ENCODE measurements at regions of chr15 and their contacts with region 1.

Region 1: GRCh38 chr15:91942676-91943576 is 89.4 kb downstream of the SLCO3A1 start:
- DNase-seq: peak; percentile 99
- H3K4me3 Mint-ChIP-seq: peak overlapping the region; percentile 65
- H3K27ac Mint-ChIP-seq: peak overlapping the region; percentile 95
- H3K4me1 Mint-ChIP-seq: peaks cover 71% of the 10 kb centered on the region
- H3K27me3 Mint-ChIP-seq: no peaks in the 10 kb centered on the region
- CTCF ChIP-seq: no peak

Region 2: GRCh38 chr15:91302588-91303439 is 640.1 kb before region 1 on chr15:
- CTCF ChIA-PET with region 1: interaction called, 36 read pairs
- POLR2A ChIA-PET with region 1: interaction called, 3 read pairs
- intact Hi-C with region 1: loop called (anchors 2 kb)
- DNase-seq: peak; percentile 77
- H3K4me3 Mint-ChIP-seq: no peak overlapping the region
- H3K27ac Mint-ChIP-seq: no peak overlapping the region
- H3K4me1 Mint-ChIP-seq: no peaks in the 10 kb centered on the region
- H3K27me3 Mint-ChIP-seq: peaks cover 81% of the 10 kb centered on the region
- CTCF ChIP-seq: peak; percentile 75

Region 3: DNA sequence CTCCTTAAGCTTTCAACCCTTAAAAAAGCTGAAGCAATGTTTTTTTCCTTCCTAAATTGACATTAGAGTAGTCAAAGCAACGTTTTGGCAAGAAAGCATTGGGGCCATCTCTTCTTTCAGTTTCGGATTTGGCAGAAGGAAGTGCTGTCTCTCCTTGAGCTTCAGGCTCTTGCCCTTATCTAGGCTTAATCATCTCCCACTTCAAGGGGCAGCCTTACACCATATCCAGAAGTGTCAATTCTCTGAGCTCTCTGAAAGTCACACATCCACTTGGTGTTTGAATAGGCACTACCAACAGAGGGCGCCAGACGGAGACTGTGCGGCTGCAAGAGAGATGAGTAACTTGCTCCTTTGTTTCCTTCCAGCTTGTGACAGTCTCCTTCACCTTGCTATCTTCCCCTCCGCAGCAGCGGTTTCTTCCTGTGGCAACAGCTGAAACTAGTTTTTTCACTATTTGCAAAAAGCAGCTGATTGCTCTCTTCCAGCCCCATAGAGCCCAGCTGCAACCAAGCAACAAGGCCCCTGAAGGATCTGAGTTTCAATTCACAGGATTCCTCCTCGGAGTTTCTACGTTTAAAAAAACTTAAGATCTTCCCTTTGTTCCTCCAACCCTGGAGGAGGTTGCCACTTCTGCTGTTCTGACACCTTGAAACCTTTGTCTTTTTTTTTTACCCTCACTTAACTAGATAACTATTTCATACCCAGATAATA is 236.4 kb before region 1 on chr15:
- CTCF ChIA-PET with region 1: interaction called, 16 read pairs
- POLR2A ChIA-PET with region 1: no interaction called
- intact Hi-C with region 1: loop called (anchors 10 kb)
- DNase-seq: peak; percentile 81
- H3K4me3 Mint-ChIP-seq: no peak overlapping the region
- H3K27ac Mint-ChIP-seq: no peak overlapping the region
- H3K4me1 Mint-ChIP-seq: peaks cover 15% of the 10 kb centered on the region
- H3K27me3 Mint-ChIP-seq: peaks cover 9% of the 10 kb centered on the region
- CTCF ChIP-seq: peak; percentile 80

Region 4: DNA sequence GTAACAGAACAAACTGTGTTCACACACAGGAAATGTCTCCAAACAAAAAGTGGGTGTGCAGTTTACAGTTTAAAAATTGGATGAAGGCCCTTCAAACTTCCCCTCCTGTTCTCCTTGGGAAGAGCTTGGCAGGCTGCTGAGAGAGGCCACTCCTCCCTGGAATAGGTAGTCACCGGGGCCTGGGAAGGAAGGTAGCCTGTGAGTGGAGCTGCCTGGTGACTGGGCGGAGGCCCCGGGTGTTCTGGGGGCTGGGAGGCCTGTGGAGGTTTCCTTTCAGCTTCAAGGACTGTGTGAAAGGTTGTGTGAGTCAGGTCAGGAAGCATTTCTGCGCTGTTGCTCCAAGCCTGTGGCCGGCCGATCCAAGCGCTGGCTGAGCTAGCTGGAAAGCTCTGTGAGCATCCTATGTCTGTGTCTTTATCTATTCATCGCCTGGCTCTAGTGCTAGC is 75.3 kb before region 1 on chr15:
- CTCF ChIA-PET with region 1: interaction called, 22 read pairs
- POLR2A ChIA-PET with region 1: interaction called, 45 read pairs
- intact Hi-C with region 1: loop called (anchors 1 kb)
- DNase-seq: peak; percentile 98
- H3K4me3 Mint-ChIP-seq: peak overlapping the region; percentile 54
- H3K27ac Mint-ChIP-seq: peak overlapping the region; percentile 90
- H3K4me1 Mint-ChIP-seq: peaks cover 29% of the 10 kb centered on the region
- H3K27me3 Mint-ChIP-seq: no peaks in the 10 kb centered on the region
- CTCF ChIP-seq: no peak

Region 5: GRCh38 chr15:91921188-91921842 is 21.6 kb before region 1 on chr15:
- CTCF ChIA-PET with region 1: interaction called, 11 read pairs
- POLR2A ChIA-PET with region 1: interaction called, 3 read pairs
- intact Hi-C with region 1: no loop called
- DNase-seq: no peak
- H3K4me3 Mint-ChIP-seq: no peak overlapping the region
- H3K27ac Mint-ChIP-seq: no peak overlapping the region
- H3K4me1 Mint-ChIP-seq: no peaks in the 10 kb centered on the region
- H3K27me3 Mint-ChIP-seq: no peaks in the 10 kb centered on the region
- CTCF ChIP-seq: no peak

Region 6: DNA sequence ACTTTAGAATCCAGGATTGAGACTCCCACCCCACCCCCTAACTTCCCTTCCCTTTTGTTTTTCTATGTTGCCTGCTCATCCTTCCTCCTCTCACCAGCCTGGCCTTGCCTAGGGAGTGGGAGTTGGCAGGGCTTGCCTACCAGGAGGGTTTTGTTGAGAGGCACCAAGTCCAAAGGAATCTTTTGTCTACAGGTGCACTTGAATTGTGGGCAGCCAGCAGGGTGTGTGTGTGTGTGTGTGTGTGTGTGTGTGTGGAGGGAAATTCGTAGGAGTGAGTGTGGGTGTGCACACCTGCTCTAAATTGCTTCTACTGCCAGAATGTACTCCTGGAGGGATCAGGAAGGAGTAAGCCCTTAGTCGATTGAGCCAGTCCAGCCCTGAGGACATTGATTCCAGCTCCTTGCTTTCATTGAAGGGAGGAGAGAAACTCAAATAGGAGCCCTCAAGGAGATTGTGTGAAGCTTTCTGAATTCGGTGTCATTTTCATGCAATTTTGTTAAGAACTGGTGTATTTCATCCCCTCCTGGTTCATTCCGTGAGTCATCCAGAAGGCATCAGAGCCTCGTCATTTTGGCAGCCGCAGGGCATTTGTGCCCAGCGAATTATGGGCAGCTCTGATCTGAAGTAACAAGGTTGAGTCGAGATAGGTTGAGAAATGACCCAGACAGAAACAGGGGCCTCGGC is 22.7 kb after region 1 on chr15:
- CTCF ChIA-PET with region 1: interaction called, 10 read pairs
- POLR2A ChIA-PET with region 1: interaction called, 10 read pairs
- intact Hi-C with region 1: no loop called
- DNase-seq: peak; percentile 98
- H3K4me3 Mint-ChIP-seq: peak overlapping the region; percentile 60
- H3K27ac Mint-ChIP-seq: peak overlapping the region; percentile 96
- H3K4me1 Mint-ChIP-seq: peaks cover 47% of the 10 kb centered on the region
- H3K27me3 Mint-ChIP-seq: no peaks in the 10 kb centered on the region
- CTCF ChIP-seq: no peak

Region 7: DNA sequence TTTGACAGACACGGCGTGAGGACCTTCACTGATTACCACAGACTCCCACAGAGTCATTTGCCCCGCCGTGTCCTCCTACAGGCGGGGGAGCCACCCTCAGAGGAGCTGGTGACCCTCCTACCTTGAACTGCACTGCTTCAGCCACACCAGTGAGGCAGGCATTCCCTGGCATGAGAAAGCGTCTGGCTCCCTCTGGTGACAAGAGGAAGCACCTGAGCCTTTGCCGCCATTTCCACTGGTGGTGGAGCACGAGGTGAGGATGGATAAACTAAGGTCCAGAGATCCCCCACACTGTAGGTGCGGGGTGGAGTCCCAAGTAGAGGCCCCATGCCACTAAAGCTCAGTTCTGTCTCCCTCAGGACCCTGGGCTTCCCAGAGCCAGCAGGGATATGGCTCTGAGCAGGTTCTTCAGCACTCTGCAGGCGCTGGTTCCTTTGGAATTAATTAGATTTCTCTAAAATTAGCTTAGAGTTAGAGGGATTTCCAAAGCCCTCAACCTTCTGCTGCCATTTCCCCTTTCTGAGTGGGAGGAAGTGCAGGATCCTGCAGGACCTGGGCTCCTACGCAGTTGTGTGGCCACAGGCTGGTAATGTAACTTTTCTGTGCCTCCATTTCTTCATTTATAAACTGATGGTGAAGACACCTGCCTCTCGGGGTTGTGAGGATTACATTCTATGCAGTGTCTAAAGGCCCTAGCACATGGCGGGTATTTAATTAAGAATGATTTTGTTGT is 134.6 kb after region 1 on chr15:
- CTCF ChIA-PET with region 1: interaction called, 45 read pairs
- POLR2A ChIA-PET with region 1: interaction called, 6 read pairs
- intact Hi-C with region 1: loop called (anchors 1 kb)
- DNase-seq: peak; percentile 79
- H3K4me3 Mint-ChIP-seq: no peak overlapping the region
- H3K27ac Mint-ChIP-seq: no peak overlapping the region
- H3K4me1 Mint-ChIP-seq: peaks cover 6% of the 10 kb centered on the region
- H3K27me3 Mint-ChIP-seq: no peaks in the 10 kb centered on the region
- CTCF ChIP-seq: peak; percentile 83